Posterior cingulate gyrus (tissue), 11 donors: ENCODE measurements at regions of chr1 and their contacts with region 1.

Region 1: GRCh38 chr1:25608488-25609178 is 8.0 kb upstream of the MAN1C1 start:
- DNase-seq: peak; percentile 67 to 96 (median 86)

Region 2: DNA sequence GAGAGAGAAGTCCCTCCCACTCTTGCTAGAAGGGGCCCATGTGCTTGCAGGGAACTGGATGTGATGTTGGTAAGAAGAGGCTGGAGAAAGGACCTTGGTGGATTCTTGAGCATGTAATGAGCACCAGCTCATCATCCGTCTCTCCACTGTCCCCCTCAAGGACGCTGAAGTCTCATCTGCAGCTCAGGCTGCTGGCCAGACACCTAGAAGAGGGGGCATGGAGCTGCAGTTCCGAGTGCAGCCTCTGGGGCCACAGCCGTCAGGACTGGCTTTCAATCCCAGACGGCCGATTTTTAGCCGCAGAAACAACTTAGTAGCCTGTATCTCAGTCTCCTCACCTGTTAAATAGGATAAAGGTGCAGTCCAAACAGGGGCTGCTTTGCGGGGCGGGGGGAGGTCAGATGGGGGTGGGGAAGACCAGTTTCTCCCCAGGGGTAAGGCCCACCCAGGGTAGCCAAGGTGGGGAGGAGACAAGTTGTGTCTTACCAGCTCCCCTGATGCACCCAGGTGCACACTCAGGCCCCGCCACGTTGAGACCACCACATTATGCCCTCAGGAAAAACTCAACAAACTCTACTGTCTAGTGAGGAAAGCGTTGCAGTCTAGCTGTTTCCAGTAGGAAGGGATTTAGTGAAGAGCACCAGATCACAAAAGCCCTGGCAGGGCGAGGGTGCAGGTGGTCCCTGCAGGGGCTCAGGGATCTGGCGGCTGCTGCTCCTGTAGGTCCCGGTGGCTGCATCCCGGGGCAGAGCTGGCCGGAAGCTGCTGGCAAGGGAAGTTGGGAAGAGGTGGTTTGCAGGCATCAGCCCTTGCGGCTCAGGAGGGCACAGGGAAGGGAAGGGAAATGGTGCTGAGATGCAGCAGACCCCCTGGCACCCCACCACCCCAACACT is 35.7 kb before region 1 on chr1:
- intact Hi-C with region 1: loop called (anchors 5 kb)
- DNase-seq: peak in 6 of 10 donors; percentile 47 to 90 (median 66)

Region 3: GRCh38 chr1:25743826-25744581 is 135.4 kb after region 1 on chr1:
- intact Hi-C with region 1: loop called (anchors 1 kb)
- DNase-seq: peak in 5 of 10 donors; percentile 49 to 90 (median 54)